ENCODE measurements at regions of chr18 and their contacts with region 1.

Region 1: DNA sequence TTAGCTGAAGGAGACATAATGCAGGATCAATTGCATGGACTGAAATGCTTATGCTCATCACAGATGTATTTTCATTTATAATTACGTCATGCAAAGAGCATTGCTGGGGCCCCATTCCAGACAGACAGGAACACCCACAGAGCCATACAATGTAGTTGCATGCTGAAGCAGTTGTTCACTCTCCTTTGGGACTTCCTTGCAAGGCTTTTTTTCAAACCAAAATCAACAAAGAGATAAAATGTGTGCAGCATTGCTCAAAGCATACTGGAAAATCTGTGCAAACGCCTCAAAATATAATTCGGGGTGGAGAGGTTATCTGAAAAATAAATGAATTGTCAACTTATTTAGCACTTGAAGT is 463.2 kb downstream of the CDH2 start:
- DNase-seq: no peak
- ATAC-seq: peak in 2 of 8 donors; percentile 50 to 76
- H3K4me3 ChIP-seq: no peak overlapping the region
- H3K27ac ChIP-seq: no peak overlapping the region
- H3K4me1 ChIP-seq: peaks cover 0 to 30% (median 10%) of the 10 kb centered on the region in 9 donors
- H3K27me3 ChIP-seq: no peaks in the 10 kb centered on the region
- CTCF ChIP-seq: no peak

Region 2: GRCh38 chr18:27661320-27662018 is 52.2 kb before region 1 on chr18:
- intact Hi-C with region 1: loop called in 1 of 10 experiments (anchors 5 kb)
- DNase-seq: no peak
- ATAC-seq: no peak
- H3K4me3 ChIP-seq: no peak overlapping the region
- H3K27ac ChIP-seq: no peak overlapping the region
- H3K4me1 ChIP-seq: peaks cover 0 to 4% (median 0%) of the 10 kb centered on the region in 9 donors
- H3K27me3 ChIP-seq: no peaks in the 10 kb centered on the region
- CTCF ChIP-seq: no peak

Measured in heart right ventricle (tissue), 16 donors.